ENCODE measurements at regions of chr2 and their contacts with region 1.

Region 1: GRCh38 chr2:64695721-64696261 is 42.1 kb upstream of the SERTAD2 start:
- DNase-seq: no peak
- CTCF ChIP-seq: no peak

Region 2: DNA sequence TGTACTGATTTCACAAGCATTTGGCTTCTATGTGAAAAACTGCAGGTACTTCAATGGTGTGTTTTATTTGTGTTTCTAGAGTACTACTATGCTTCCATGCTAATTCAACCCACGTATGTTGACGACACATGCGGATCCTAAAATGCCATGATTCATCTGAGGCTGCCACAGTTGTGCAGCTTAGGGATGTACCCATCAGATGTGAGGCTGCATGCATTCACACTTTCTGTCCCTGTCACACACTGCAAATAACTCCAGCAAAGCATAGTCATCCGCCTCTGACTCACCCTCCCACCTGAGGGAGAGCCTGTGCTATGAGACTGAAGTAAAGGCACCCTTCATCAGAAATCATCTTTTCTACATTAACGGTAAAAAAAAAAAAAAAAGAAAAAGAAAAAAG is 19.9 kb before region 1 on chr2:
- CTCF ChIA-PET with region 1: interaction called, 16 read pairs
- POLR2A ChIA-PET with region 1: no interaction called
- DNase-seq: no peak
- CTCF ChIP-seq: no peak

Region 3: GRCh38 chr2:64685438-64685837 is 10.4 kb before region 1 on chr2:
- CTCF ChIA-PET with region 1: interaction called, 16 read pairs
- POLR2A ChIA-PET with region 1: interaction called, 3 read pairs
- DNase-seq: no peak
- CTCF ChIP-seq: no peak